ENCODE measurements at regions of chr22 and their contacts with region 1.

Region 1: DNA sequence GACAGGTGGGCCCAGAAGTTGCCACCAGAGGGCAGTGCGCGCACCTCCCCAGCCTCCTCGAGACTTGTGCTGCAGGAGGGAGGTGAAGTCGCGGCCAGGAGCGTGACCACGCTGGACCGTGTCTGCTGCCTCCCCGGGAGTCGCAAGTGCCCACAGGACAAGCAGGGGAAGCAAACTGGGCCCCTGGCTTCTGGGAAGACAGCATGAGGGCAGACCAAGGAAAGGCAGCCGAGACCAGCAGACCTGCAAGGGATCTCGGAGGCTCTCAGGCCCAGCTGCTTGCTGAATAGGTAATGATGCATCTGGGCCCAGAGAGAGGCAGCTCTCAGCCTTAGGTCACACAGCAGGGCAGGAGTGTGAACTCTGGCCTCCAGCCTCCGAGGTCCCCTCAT is 17.0 kb upstream of the IL2RB start:
- DNase-seq: peak; percentile 92
- H3K4me3 Mint-ChIP-seq: peak overlapping the region; percentile 68
- H3K27ac Mint-ChIP-seq: peak overlapping the region; percentile 67
- H3K4me1 Mint-ChIP-seq: peaks cover 79% of the 10 kb centered on the region
- H3K27me3 Mint-ChIP-seq: no peaks in the 10 kb centered on the region

Region 2: GRCh38 chr22:37077884-37078485 is 88.7 kb before region 1 on chr22:
- CTCF ChIA-PET with region 1: interaction called, 28 read pairs
- POLR2A ChIA-PET with region 1: interaction called, 52 read pairs
- intact Hi-C with region 1: loop called (anchors 1 kb)
- DNase-seq: peak; percentile 91
- H3K4me3 Mint-ChIP-seq: peak overlapping the region; percentile 49
- H3K27ac Mint-ChIP-seq: peak overlapping the region; percentile 91
- H3K4me1 Mint-ChIP-seq: peaks cover 52% of the 10 kb centered on the region
- H3K27me3 Mint-ChIP-seq: peaks cover 4% of the 10 kb centered on the region

Region 3: GRCh38 chr22:37139762-37140161 is 26.9 kb before region 1 on chr22:
- CTCF ChIA-PET with region 1: interaction called, 183 read pairs
- POLR2A ChIA-PET with region 1: interaction called, 240 read pairs
- intact Hi-C with region 1: loop called (anchors 1 kb)
- DNase-seq: peak; percentile 40
- H3K4me3 Mint-ChIP-seq: peak overlapping the region; percentile 25
- H3K27ac Mint-ChIP-seq: peak overlapping the region; percentile 98
- H3K4me1 Mint-ChIP-seq: peaks cover 78% of the 10 kb centered on the region
- H3K27me3 Mint-ChIP-seq: no peaks in the 10 kb centered on the region

Region 4: DNA sequence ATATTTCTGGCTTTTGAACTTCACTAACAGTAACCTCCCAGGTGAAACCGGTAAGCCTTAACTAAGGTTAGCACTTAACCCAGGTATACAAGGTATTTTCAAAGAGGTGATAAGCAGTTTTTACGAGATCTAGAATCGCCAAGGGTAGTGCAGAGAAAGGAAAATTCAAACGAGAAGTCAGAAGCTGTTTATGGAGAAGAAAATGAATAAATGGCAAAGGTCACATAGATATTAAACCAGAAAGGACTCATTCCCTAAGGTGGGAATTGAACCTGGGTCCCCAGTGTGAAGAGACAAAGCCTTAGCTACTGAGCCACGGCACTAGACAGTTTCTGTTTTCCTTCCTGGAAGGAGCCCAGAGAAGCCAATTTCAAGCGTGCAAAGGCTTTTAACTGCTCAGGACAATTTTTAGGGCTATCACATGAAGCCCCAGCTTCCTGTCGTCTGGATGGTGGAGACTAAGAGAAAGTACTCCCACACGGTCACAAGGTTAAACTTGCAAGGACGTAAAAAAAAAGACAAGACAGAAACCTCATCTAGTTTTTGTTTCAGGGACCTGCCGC is 27.0 kb after region 1 on chr22:
- CTCF ChIA-PET with region 1: interaction called, 38 read pairs
- POLR2A ChIA-PET with region 1: interaction called, 25 read pairs
- intact Hi-C with region 1: loop called (anchors 1 kb)
- DNase-seq: peak; percentile 67
- H3K4me3 Mint-ChIP-seq: peak overlapping the region; percentile 57
- H3K27ac Mint-ChIP-seq: peak overlapping the region; percentile 81
- H3K4me1 Mint-ChIP-seq: peaks cover 52% of the 10 kb centered on the region
- H3K27me3 Mint-ChIP-seq: no peaks in the 10 kb centered on the region

Region 5: DNA sequence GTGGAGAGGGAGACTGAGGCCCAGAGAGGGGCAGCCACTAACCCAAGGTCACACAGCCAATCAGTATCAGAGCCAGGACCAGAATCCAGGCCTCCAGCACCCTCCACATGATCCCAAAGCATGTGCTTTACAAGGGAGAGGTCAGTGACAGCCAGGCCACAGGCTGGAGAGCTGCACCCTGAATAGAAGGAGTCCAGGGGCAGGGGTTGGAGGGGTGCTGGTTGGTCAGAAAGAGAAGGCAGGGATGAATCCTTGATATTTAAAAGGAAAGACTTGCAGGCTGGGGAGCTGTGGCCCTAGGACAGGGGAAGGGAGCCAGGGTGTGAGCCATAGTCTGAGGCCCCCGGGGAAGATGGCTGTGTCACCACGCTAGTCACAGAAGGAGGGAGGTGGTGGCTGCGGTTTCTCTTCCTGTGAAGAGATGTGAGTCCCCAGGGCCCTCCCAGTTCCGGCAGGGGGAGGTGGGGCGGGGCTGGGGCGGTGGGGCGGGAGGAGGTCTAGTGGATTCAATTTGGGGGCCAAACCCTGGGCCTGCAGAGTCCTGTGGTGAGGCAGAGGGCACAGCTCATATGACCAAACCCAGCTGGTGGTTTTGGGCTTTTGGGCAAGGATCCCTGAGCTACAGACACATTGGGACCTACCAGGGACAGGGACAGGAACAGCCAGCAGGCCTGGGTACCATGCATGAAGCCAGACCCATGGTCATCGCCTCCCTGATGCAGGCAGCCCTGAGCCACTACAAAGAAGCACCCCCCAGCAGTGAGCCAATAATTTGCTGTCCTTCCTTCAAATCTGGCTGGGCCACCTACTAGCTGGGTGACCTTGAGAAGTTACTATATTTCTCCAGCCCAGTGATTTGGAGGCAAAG is 63.4 kb after region 1 on chr22:
- CTCF ChIA-PET with region 1: no interaction called
- POLR2A ChIA-PET with region 1: interaction called, 13 read pairs
- intact Hi-C with region 1: loop called (anchors 2 kb)
- DNase-seq: peak; percentile 97
- H3K4me3 Mint-ChIP-seq: peak overlapping the region; percentile 67
- H3K27ac Mint-ChIP-seq: peak overlapping the region; percentile 98
- H3K4me1 Mint-ChIP-seq: peaks cover 90% of the 10 kb centered on the region
- H3K27me3 Mint-ChIP-seq: no peaks in the 10 kb centered on the region